CD8-positive, alpha-beta memory T cell (primary cell): ENCODE measurements at regions of chr17 and their contacts with region 1.

Region 1: GRCh38 chr17:36133602-36134236 is 30.1 kb downstream of the CCL4 start:
- DNase-seq: no peak
- H3K4me3 ChIP-seq: no peak overlapping the region
- H3K4me3 Mint-ChIP-seq: no peak overlapping the region
- H3K27ac ChIP-seq: no peak overlapping the region
- H3K27ac Mint-ChIP-seq: peak overlapping the region in 1 of 8 donors; percentile 25
- H3K4me1 ChIP-seq: no peaks in the 10 kb centered on the region
- H3K4me1 Mint-ChIP-seq: peaks cover 3 to 14% (median 12%) of the 10 kb centered on the region in 3 donors
- H3K27me3 ChIP-seq: no peaks in the 10 kb centered on the region
- H3K27me3 Mint-ChIP-seq: peaks cover 0 to 10% of the 10 kb centered on the region in 2 donors

Region 2: GRCh38 chr17:36148559-36149295 is 15.0 kb after region 1 on chr17:
- CTCF ChIA-PET with region 1: interaction called, 12 read pairs
- POLR2A ChIA-PET with region 1: interaction called, 3 read pairs
- DNase-seq: peak; percentile 49 to 80 (median 67)
- H3K4me3 ChIP-seq: no peak overlapping the region
- H3K4me3 Mint-ChIP-seq: peak overlapping the region in 6 of 7 donors; percentile 22 to 84 (median 67)
- H3K27ac ChIP-seq: no peak overlapping the region
- H3K27ac Mint-ChIP-seq: peak overlapping the region in 5 of 8 donors; percentile 21 to 79 (median 55)
- H3K4me1 ChIP-seq: no peaks in the 10 kb centered on the region
- H3K4me1 Mint-ChIP-seq: peaks cover 4 to 43% (median 39%) of the 10 kb centered on the region in 3 donors
- H3K27me3 ChIP-seq: no peaks in the 10 kb centered on the region
- H3K27me3 Mint-ChIP-seq: peaks cover 5 to 9% of the 10 kb centered on the region in 2 donors